ENCODE measurements at regions of chr14 and their contacts with region 1.

Region 1: GRCh38 chr14:32939254-32940065 is 781 bp downstream of the NPAS3 start:
- DNase-seq: peak; percentile 63
- ATAC-seq: peak; percentile 61
- H3K4me3 ChIP-seq: peak overlapping the region; percentile 64
- H3K27ac ChIP-seq: no peak overlapping the region
- H3K4me1 ChIP-seq: peaks cover 14% of the 10 kb centered on the region; the same call in 1 of the 2 replicates
- H3K27me3 ChIP-seq: peaks cover 29% of the 10 kb centered on the region
- CTCF ChIP-seq: no peak

Region 2: DNA sequence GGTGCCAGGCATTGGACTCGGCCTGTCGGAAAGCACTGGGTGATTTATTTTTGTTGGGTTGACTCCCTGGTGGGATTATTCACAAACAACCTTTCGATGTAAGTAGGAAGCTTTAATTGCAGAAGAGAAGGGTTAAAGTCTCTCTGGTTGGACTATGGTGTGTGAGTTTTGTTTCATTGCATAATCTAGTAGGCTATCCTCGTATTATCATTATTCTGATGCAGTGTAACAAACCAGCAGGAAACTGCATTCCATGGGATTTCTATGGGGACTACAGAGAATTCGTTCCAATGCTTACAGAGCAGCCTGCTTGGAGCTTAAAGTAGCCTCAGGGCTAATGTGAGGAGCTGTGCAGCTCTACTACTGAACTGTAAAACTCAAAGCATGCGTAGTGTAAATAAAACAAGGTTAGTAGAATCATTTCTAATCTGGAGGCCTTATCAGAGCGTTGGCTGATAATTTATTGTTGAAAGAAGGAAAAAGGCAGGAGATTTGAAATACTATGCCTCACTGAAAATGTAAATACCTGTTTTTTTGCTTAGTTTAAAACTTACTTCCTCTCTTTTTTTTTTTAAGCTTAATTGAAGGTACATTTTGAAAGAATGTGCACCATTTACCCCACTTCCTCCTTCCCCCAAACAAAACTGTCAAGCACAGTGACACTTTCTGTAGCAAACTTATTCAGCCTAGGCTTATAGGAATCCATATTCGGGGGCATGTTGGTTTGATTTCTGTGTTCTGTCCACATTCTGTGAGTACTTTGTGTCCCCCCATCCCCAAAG is 225.9 kb after region 1 on chr14:
- CTCF ChIA-PET with region 1: no interaction called
- POLR2A ChIA-PET with region 1: no interaction called
- intact Hi-C with region 1: loop called (anchors 5 kb)
- DNase-seq: peak; percentile 57
- ATAC-seq: peak; percentile 70
- H3K4me3 ChIP-seq: no peak overlapping the region
- H3K27ac ChIP-seq: no peak overlapping the region
- H3K4me1 ChIP-seq: peaks cover 13% of the 10 kb centered on the region
- H3K27me3 ChIP-seq: peaks cover 3% of the 10 kb centered on the region; the same call in 1 of the 2 replicates
- CTCF ChIP-seq: no peak

Measured in PC-3 (cell line).